Mammary epithelial cell (primary cell): ENCODE measurements at regions of chr17 and their contacts with region 1.

Region 1: GRCh38 chr17:28967221-28968140 is 16.2 kb upstream of the PHF12 start:
- DNase-seq: no peak
- H3K4me3 ChIP-seq: no peak overlapping the region
- H3K27ac ChIP-seq: no peak overlapping the region
- H3K4me1 ChIP-seq: peaks cover 5% of the 10 kb centered on the region
- H3K27me3 ChIP-seq: peaks cover 2% of the 10 kb centered on the region
- CTCF ChIP-seq: no peak

Region 2: GRCh38 chr17:28865946-28866752 is 101.3 kb before region 1 on chr17:
- CTCF ChIA-PET with region 1: no interaction called
- dilution Hi-C with region 1: loop called (anchors 5 kb)
- in situ Hi-C with region 1: no loop called
- intact Hi-C with region 1: no loop called
- DNase-seq: no peak
- H3K4me3 ChIP-seq: no peak overlapping the region
- H3K27ac ChIP-seq: no peak overlapping the region
- H3K4me1 ChIP-seq: no peaks in the 10 kb centered on the region
- H3K27me3 ChIP-seq: no peaks in the 10 kb centered on the region
- CTCF ChIP-seq: no peak

Region 3: DNA sequence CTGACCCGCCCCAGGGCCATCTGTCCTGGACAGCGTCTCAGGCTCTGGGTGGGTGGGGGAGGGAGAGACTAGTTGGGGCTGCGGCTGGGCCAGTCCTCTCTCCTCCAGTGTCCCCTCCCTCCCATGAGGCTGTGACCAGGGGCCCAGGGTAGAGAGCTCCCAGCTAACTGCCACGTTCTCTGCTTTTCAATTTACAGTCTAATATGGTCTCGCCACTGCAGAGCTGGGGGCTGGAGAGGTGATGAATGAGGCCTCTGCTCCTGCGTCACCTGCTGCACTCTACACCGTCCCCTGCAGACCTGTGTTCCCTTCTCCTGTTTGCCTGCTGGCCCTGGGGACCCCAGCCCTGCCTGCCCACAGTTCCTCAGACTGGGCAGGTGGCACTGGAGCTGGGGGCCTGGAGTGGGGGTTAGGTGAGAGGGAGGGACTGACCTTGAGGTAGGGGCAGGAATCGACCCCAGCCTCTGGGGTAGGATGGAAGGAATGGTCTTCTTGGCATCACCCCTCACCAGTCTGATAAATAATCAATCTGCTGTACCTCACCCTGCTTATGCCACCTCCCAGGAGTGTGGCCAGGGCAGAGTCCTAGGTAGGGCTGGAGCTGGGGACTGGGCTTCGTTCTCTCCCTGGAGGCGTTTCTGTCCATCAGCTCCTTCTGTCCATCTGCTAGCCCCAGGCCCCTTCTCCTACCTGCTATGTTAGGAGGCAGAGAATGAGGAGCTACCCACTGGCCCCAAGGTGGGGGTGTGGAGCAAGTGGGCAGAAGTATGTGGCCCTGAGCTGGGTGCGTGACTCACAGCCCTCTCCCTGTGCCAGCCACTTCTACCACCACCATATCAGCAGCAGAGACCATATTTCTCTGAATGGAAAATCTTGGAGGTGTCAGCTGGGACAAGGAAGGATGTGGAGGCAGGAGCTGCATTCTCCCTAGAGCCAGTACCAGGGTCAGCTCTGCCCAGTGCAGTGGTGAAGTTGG is 25.4 kb after region 1 on chr17:
- CTCF ChIA-PET with region 1: interaction called, 10 read pairs
- dilution Hi-C with region 1: no loop called
- in situ Hi-C with region 1: no loop called
- intact Hi-C with region 1: no loop called
- DNase-seq: peak; percentile 14
- H3K4me3 ChIP-seq: no peak overlapping the region
- H3K27ac ChIP-seq: no peak overlapping the region
- H3K4me1 ChIP-seq: peaks cover 6% of the 10 kb centered on the region
- H3K27me3 ChIP-seq: peaks cover 1% of the 10 kb centered on the region
- CTCF ChIP-seq: peak in 1 of 2 donors; percentile 10

Region 4: DNA sequence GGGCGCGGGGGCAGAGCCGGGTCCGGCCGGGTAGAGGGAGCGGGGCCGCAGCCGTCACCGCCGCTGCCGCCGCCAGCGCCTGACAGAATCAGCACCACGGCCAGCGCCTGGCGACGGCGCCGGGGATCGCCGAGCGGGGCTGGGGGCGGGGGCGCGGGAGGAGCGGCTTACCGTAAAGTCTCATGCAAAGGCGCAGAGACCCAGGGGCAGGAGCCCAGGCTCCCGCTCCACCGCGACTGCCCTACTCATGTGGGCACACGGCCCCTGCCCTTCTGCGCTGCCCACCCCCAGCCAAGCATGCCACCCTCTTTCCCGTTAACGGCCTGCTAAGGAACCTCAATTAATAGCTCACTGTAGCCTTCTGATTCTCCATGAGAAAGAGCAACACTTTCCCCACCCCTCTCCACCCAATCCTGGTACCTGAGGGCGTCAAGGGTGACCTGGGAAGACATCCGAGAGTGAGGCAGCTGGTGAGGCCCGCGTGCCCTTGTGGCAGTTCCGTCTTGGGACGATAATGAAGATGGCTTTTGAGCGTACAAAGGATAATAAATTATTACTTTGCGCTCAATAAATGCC is 38.5 kb after region 1 on chr17 and contains the start of gene SEZ6:
- CTCF ChIA-PET with region 1: no interaction called
- dilution Hi-C with region 1: loop called (anchors 5 kb)
- in situ Hi-C with region 1: no loop called
- intact Hi-C with region 1: no loop called
- DNase-seq: peak; percentile 47
- H3K4me3 ChIP-seq: no peak within 1 kb of the TSS
- H3K27ac ChIP-seq: no peak within 1 kb of the TSS
- H3K4me1 ChIP-seq: no peaks in the 10 kb centered on the region
- H3K27me3 ChIP-seq: peaks cover 13% of the 10 kb centered on the region
- CTCF ChIP-seq: no peak
- total RNA-seq, gene SEZ6: not detected

Region 5: GRCh38 chr17:29059281-29059680 is 91.8 kb after region 1 on chr17:
- CTCF ChIA-PET with region 1: no interaction called
- dilution Hi-C with region 1: no loop called
- in situ Hi-C with region 1: no loop called
- intact Hi-C with region 1: no loop called
- DNase-seq: peak; percentile 51
- H3K4me3 ChIP-seq: no peak overlapping the region
- H3K27ac ChIP-seq: no peak overlapping the region
- H3K4me1 ChIP-seq: no peaks in the 10 kb centered on the region
- H3K27me3 ChIP-seq: no peaks in the 10 kb centered on the region
- CTCF ChIP-seq: no peak

Region 6: DNA sequence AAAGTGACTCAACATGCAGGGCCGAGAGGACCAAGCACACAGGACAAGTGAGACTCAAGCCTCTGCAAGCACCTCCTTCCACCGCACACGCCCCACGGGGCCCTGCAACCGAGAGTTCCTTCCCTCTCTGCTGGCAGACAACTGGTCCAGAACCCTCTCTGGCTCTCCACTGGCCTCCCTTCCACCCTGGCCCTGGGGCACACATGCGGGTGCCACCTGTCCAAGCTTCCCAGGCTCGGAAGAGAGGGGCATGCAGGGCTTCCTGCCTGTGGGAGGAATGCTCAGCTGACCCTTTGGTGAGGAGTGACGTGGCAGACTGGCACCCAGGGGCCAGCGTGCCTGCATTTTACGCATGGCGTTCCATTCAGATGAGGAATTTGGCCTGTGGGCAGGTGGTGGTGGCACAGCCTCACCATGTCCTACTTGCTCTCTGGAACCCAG is 135.3 kb after region 1 on chr17:
- CTCF ChIA-PET with region 1: interaction called, 5 read pairs
- dilution Hi-C with region 1: no loop called
- in situ Hi-C with region 1: loop called (anchors 5 kb)
- intact Hi-C with region 1: loop called (anchors 2 kb)
- DNase-seq: peak; percentile 90
- H3K4me3 ChIP-seq: no peak overlapping the region
- H3K27ac ChIP-seq: peak overlapping the region; percentile 54
- H3K4me1 ChIP-seq: peaks cover 24% of the 10 kb centered on the region
- H3K27me3 ChIP-seq: no peaks in the 10 kb centered on the region
- CTCF ChIP-seq: no peak

Region 7: DNA sequence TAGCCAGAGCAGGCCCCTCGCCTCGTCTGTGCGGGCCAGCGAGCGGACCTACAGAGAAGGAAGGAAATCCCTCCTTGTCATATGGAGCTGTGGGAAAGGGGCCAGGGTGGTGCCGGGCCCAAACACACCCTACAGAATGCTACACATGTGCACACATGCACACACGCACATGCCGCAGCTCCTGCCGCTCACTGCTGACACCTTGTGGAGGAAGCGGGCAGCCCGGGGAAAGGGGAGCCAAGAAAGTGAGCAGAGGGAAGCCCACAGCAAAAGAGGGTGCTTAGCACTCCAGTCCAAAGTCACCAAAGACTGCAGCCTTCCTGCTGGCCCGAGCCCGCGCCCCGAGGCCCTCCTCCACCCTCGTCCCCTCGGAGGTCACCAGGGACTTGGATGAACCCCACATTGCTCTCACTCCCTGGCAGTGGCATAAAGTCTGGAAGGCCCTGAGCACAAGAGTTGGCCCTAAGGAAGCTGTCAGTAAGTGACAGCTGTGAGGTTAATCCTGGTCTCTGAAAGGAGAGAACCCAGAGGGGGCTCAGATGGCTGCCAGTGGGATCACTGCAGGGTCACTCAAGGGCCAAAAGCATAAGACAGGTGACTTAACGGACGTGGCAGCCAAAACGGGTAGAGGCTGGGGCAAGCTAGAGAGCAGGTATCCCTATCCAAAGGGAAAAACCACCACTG is 144.5 kb after region 1 on chr17:
- CTCF ChIA-PET with region 1: interaction called, 35 read pairs
- dilution Hi-C with region 1: no loop called
- in situ Hi-C with region 1: loop called (anchors 5 kb)
- intact Hi-C with region 1: loop called (anchors 1 kb)
- DNase-seq: peak; percentile 55
- H3K4me3 ChIP-seq: no peak overlapping the region
- H3K27ac ChIP-seq: no peak overlapping the region
- H3K4me1 ChIP-seq: peaks cover 10% of the 10 kb centered on the region
- H3K27me3 ChIP-seq: no peaks in the 10 kb centered on the region
- CTCF ChIP-seq: peak; percentile 96 to 98

Region 8: DNA sequence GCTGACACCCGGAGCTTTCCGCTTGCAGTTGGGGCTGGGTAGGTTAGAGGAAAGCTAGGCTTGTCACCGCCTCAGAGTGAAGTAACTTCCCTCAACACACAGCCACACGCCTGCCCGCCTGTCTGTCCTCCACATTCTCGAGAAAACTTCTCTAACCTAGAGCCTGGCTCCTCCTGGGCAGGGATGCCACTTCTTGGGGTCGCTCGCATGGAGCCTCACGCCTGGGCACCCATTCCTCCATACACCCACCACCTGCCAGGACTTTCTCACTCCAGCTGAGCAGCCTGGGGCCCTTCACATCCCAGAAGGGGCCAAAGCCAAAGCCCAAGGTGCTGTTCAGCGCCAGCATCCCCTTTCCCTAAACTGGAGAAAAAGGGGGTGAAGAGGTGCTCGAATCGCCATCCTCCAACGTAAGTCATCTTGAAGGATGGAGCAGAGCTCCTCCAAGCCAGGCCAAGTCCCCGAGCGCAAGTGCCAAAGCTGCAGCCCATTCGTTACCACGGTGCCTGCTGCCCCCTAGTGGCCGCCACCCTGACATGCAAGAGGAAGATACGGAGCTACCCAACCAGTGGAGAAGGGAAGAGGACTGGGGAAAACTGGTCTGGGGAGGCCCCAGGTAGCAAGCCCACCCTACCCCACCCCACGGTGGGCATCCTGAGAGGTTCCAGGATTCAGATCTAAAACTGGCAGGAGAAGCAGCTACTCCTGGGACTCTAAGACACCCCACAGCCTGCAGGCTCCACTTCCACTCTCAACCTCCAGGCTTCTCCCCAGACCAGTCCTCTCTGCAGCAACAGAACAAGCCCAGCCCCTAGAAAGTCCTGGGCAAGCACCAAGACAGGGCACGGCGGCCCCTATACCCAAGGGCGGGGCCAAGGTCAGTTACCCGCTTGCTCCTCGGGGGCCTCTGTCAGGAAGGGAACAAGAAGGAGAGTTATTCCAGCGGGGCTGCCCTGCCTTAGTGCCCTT is 149.6 kb after region 1 on chr17:
- CTCF ChIA-PET with region 1: interaction called, 35 read pairs
- dilution Hi-C with region 1: no loop called
- in situ Hi-C with region 1: no loop called
- intact Hi-C with region 1: loop called (anchors 1 kb)
- DNase-seq: peak; percentile 27
- H3K4me3 ChIP-seq: no peak overlapping the region
- H3K27ac ChIP-seq: no peak overlapping the region
- H3K4me1 ChIP-seq: no peaks in the 10 kb centered on the region
- H3K27me3 ChIP-seq: no peaks in the 10 kb centered on the region
- CTCF ChIP-seq: peak; percentile 90 to 91

Region 9: DNA sequence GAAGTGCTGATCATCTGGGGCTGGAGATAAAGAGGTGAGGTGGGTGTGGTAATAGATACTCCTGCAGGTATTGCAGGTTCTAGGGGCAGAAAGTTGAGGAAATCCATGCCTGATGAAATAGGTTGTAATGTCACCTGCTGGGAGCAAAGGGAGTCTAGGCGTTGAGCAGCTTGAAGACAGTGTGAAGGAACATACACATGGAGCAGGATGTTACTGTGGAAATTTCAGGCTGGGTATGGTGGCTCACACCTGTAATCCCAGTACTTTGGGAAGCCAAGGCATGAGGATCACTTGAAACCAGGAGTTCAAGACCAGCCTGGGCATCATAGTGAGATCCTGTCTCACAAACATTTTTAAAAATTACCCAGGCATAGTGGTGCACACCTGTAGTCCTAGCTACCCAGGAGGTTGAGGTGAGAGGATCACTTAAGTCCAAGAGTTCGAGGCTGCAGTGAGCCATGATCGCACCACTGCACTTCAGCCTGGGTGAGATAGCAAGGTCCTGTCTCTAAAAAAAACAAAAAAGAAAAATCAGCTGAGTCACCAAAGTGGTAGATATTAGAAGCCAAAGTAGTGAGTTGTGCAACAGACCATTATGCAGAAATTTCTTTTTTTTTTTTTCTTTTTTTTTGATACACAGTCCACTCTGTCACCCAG is 270.1 kb after region 1 on chr17:
- CTCF ChIA-PET with region 1: no interaction called
- dilution Hi-C with region 1: no loop called
- in situ Hi-C with region 1: no loop called
- intact Hi-C with region 1: no loop called
- DNase-seq: peak; percentile 33
- H3K4me3 ChIP-seq: no peak overlapping the region
- H3K27ac ChIP-seq: no peak overlapping the region
- H3K4me1 ChIP-seq: peaks cover 35% of the 10 kb centered on the region
- H3K27me3 ChIP-seq: no peaks in the 10 kb centered on the region
- CTCF ChIP-seq: no peak